HepG2 (cell line): ENCODE measurements at regions of chr1 and their contacts with region 1.

Region 1: DNA sequence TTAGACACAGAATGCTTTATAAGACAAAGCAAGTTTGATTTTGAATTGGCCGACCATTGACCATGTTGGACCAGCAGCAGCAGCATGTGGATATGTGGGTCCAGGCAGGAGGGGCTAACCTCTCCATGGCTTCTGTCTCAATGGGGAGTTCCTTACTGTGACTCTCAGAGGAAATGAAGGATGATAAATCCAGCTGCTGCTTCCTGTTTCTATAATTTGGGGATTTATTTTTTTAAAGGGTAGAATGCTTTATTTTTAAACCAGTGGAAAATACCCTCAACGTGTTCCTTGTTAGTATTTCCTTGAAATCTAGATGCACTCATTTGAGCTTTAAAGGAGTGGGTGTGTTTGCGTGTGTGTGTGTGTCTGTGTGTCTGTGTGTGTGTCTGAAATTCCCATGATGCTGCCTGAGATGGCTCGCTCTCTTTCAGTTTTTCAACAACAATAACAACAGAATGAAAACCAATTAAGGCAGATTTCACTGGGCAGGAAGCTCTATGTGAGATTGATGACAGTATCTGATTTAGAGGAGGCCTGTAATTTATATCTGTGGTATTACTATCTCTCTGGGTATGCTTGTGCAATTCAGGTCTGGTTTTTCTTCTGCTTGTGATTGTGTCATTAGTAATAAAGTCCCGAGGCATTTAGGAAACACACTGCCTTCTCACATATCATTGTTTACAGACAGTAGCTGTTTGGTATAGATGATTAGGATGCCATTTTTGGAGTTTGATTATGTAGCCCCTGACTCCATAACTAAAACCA is 86.1 kb upstream of the ZNF326 start:
- DNase-seq: no peak
- ATAC-seq: no peak
- H3K4me3 ChIP-seq: no peak overlapping the region
- H3K27ac ChIP-seq: no peak overlapping the region
- H3K4me1 ChIP-seq: peaks cover 58% of the 10 kb centered on the region
- H3K27me3 ChIP-seq: no peaks in the 10 kb centered on the region
- CTCF ChIP-seq: no peak
- EP300 ChIP-seq: no peak
- POLR2A ChIP-seq: no peak
- RAD21 ChIP-seq: no peak

Region 2: DNA sequence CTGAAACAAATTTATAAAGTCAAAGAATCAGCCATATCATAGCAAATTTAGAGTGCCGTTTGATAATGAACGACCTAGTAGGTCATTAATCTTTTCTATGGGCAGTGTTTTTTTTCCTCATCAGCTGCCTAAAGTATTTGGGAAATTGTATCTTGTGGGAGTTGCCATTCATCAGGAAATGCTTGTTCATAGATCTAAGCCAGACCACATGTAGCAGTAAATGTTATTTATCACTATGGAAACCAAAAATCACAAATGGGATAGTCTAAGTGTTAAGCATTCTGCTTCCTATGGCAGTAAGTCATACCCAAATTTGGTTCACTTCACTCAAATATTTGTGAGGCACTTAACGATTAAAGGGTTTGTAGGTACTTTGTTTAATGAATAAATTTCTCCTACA is 35.1 kb before region 1 on chr1:
- CTCF ChIA-PET with region 1: no interaction called
- POLR2A ChIA-PET with region 1: no interaction called
- in situ Hi-C with region 1: no loop called
- intact Hi-C with region 1: loop called (anchors 5 kb)
- DNase-seq: no peak
- ATAC-seq: no peak
- H3K4me3 ChIP-seq: no peak overlapping the region
- H3K27ac ChIP-seq: peak overlapping the region; percentile 24
- H3K4me1 ChIP-seq: peaks cover 36% of the 10 kb centered on the region
- H3K27me3 ChIP-seq: no peaks in the 10 kb centered on the region
- CTCF ChIP-seq: no peak
- EP300 ChIP-seq: no peak
- POLR2A ChIP-seq: no peak
- RAD21 ChIP-seq: no peak

Region 3: DNA sequence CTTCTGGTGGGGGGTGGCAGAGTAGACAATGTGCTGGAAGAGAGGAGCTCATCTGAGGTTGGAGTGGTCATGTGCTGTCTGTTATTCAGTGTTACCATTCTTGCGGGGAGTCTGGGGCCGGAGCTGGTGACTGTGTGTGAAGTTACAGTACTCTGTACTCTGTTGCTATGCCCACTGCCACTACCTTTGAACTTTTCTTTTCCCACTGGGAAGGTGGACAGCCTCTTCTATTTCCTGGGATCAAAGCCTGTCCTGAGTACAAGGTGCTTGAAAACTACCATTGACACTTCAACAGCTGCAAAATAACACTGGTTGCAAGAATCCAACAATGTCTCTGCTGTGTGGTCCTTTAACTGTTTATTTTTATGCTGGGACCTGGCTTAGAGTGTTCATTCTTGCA is 19.7 kb after region 1 on chr1:
- CTCF ChIA-PET with region 1: no interaction called
- POLR2A ChIA-PET with region 1: interaction called, 5 read pairs
- in situ Hi-C with region 1: no loop called
- intact Hi-C with region 1: loop called (anchors 1 kb)
- DNase-seq: peak; percentile 90
- ATAC-seq: peak; percentile 99
- H3K4me3 ChIP-seq: no peak overlapping the region
- H3K27ac ChIP-seq: peak overlapping the region; percentile 67
- H3K4me1 ChIP-seq: peaks cover 56% of the 10 kb centered on the region
- H3K27me3 ChIP-seq: no peaks in the 10 kb centered on the region
- CTCF ChIP-seq: no peak
- EP300 ChIP-seq: peak in 1 of 2 experiments; percentile 76; a peak in 2 of 4 replicates
- POLR2A ChIP-seq: no peak
- RAD21 ChIP-seq: no peak

Region 4: GRCh38 chr1:89942825-89943688 is 34.2 kb after region 1 on chr1:
- CTCF ChIA-PET with region 1: no interaction called
- POLR2A ChIA-PET with region 1: no interaction called
- in situ Hi-C with region 1: no loop called
- intact Hi-C with region 1: loop called (anchors 2 kb)
- DNase-seq: peak; percentile 96
- ATAC-seq: peak; percentile 87
- H3K4me3 ChIP-seq: peak overlapping the region in 1 of 3 experiments; percentile 17; a peak in 1 of 6 replicates
- H3K27ac ChIP-seq: peak overlapping the region; percentile 80
- H3K4me1 ChIP-seq: peaks cover 74% of the 10 kb centered on the region
- H3K27me3 ChIP-seq: no peaks in the 10 kb centered on the region
- CTCF ChIP-seq: no peak
- EP300 ChIP-seq: peak in 1 of 2 experiments; percentile 43; a peak in 2 of 4 replicates
- POLR2A ChIP-seq: no peak
- RAD21 ChIP-seq: no peak